Tibial artery (tissue), 4 donors: ENCODE measurements at regions of chr16 and their contacts with region 1.

Region 1: GRCh38 chr16:4616047-4616811 is 1.5 kb upstream of the UBALD1 start:
- DNase-seq: peak; percentile 100
- H3K4me3 ChIP-seq: peak overlapping the region; percentile 72 to 79
- H3K27ac ChIP-seq: peak overlapping the region; percentile 96 to 99
- H3K4me1 ChIP-seq: peaks cover 0 to 66% (median 55%) of the 10 kb centered on the region in 4 donors
- H3K27me3 ChIP-seq: no peaks in the 10 kb centered on the region
- CTCF ChIP-seq: peak in 1 of 2 experiments; percentile 15

Region 2: GRCh38 chr16:4475880-4476788 is 140.1 kb before region 1 on chr16 and contains the start of gene HMOX2:
- intact Hi-C with region 1: loop called (anchors 10 kb)
- DNase-seq: peak; percentile 88 to 96
- H3K4me3 ChIP-seq: peak within 1 kb of the TSS; percentile 68 to 83
- H3K27ac ChIP-seq: peak within 1 kb of the TSS; percentile 69 to 82
- H3K4me1 ChIP-seq: peaks cover 0 to 32% (median 28%) of the 10 kb centered on the region in 4 donors
- H3K27me3 ChIP-seq: no peaks in the 10 kb centered on the region
- CTCF ChIP-seq: peak; percentile 22 to 37

Region 3: GRCh38 chr16:4505356-4506147 is 110.7 kb before region 1 on chr16:
- intact Hi-C with region 1: no loop called
- DNase-seq: no peak
- H3K4me3 ChIP-seq: no peak overlapping the region
- H3K27ac ChIP-seq: no peak overlapping the region
- H3K4me1 ChIP-seq: peaks cover 0 to 13% (median 7%) of the 10 kb centered on the region in 4 donors
- H3K27me3 ChIP-seq: no peaks in the 10 kb centered on the region
- CTCF ChIP-seq: no peak

Region 4: GRCh38 chr16:4683255-4684064 is 67.2 kb after region 1 on chr16:
- intact Hi-C with region 1: loop called (anchors 2 kb)
- DNase-seq: no peak
- H3K4me3 ChIP-seq: no peak overlapping the region
- H3K27ac ChIP-seq: no peak overlapping the region
- H3K4me1 ChIP-seq: peaks cover 0 to 7% (median 0%) of the 10 kb centered on the region in 4 donors
- H3K27me3 ChIP-seq: no peaks in the 10 kb centered on the region
- CTCF ChIP-seq: no peak

Region 5: GRCh38 chr16:5071681-5072333 is 455.6 kb after region 1 on chr16 and contains the start of gene ALG1:
- intact Hi-C with region 1: no loop called
- DNase-seq: peak; percentile 89 to 93
- H3K4me3 ChIP-seq: peak within 1 kb of the TSS; percentile 67 to 85
- H3K27ac ChIP-seq: peak within 1 kb of the TSS; percentile 81 to 83
- H3K4me1 ChIP-seq: peaks cover 0 to 17% (median 6%) of the 10 kb centered on the region in 4 donors
- H3K27me3 ChIP-seq: no peaks in the 10 kb centered on the region
- CTCF ChIP-seq: no peak